ENCODE measurements at regions of chr3 and their contacts with region 1.

Region 1: GRCh38 chr3:45043728-45044299 is 17.7 kb downstream of the CLEC3B start:
- DNase-seq: no peak
- H3K4me3 ChIP-seq: no peak overlapping the region
- H3K27ac ChIP-seq: peak overlapping the region; percentile 9 to 64
- H3K4me1 ChIP-seq: no peaks in the 10 kb centered on the region
- H3K27me3 ChIP-seq: no peaks in the 10 kb centered on the region
- CTCF ChIP-seq: peak in 2 of 3 experiments; percentile 14 to 38

Region 2: GRCh38 chr3:44992555-44993470 is 51.0 kb before region 1 on chr3:
- intact Hi-C with region 1: no loop called
- DNase-seq: no peak
- H3K4me3 ChIP-seq: no peak overlapping the region
- H3K27ac ChIP-seq: no peak overlapping the region
- H3K4me1 ChIP-seq: peaks cover 0 to 6% of the 10 kb centered on the region in 2 donors
- H3K27me3 ChIP-seq: no peaks in the 10 kb centered on the region
- CTCF ChIP-seq: peak in 2 of 3 experiments; percentile 57 to 58

Region 3: DNA sequence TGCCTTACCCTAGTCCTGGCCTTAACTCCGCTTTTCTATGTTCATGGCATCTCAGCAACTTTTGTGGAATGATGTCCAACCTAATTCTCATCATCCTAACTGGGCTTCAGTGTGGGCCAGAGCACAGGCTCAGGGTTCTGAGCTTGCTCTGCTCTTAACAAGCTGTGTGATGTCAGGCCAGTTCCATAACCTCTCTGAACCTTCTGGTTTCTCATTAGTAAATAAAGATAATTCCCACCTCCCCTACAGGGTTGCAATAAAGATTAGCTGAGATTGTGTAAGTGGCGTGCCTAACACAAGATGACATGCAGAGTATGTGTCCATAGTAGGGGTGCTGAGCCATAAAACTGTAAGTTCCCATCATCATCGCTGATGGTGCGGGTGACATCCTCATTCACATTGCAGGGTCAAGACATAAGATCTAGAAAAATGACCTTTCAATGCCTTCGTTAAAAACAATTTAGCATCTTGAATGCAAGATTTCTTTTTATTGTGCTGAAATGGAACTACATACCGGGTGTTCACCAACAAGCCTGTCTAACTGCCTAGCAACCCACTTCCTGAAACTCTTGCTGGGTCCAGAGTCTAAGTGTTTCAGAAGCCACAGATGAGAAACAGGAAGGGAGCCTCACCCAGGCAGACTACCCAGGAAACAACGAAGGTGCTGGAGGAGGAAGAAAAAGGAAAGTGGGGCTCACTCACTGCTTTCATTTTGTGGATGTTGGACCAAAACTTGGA is 66.1 kb after region 1 on chr3:
- intact Hi-C with region 1: loop called (anchors 5 kb)
- DNase-seq: no peak
- H3K4me3 ChIP-seq: no peak overlapping the region
- H3K27ac ChIP-seq: no peak overlapping the region
- H3K4me1 ChIP-seq: peaks cover 2% of the 10 kb centered on the region in 2 donors
- H3K27me3 ChIP-seq: no peaks in the 10 kb centered on the region
- CTCF ChIP-seq: no peak

Region 4: DNA sequence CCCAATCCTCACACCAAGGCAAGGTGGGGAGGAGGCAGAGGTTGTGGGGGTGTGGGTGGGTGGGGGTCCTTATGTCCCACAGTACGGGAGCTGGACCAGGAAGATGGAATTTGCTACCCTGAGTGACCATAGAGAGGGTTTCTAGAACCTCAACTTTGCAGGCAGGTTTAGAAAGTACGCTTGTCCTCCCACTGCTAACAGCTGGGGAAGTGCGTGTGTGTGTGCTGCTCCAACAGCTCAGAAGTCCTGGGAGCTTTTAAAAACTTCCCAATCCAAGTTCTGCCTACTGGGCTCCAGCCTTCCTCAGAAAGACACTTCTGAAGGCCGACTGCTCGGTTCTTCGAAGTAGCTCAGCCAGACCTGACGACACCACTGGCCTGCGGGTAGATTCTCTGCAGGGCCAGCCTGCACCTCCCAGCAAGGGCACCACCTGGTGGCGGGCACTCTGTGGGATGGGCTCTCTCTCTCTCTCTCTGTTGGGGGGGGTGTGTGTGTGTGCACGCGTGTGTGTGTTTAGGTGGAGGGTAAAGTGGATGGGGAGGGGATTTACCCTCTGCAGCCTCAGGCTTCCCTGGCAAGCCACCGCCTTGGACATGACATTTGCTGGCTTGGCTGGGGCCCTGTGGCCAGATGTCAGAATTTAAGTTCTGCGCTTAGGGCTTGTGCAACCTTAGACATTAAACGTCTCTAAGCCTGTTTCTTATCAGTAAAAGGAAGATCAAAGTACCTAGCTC is 166.7 kb after region 1 on chr3:
- intact Hi-C with region 1: loop called (anchors 1 kb)
- DNase-seq: peak; percentile 25 to 84
- H3K4me3 ChIP-seq: no peak overlapping the region
- H3K27ac ChIP-seq: no peak overlapping the region
- H3K4me1 ChIP-seq: no peaks in the 10 kb centered on the region
- H3K27me3 ChIP-seq: no peaks in the 10 kb centered on the region
- CTCF ChIP-seq: peak; percentile 60 to 88 (median 80)

Region 5: DNA sequence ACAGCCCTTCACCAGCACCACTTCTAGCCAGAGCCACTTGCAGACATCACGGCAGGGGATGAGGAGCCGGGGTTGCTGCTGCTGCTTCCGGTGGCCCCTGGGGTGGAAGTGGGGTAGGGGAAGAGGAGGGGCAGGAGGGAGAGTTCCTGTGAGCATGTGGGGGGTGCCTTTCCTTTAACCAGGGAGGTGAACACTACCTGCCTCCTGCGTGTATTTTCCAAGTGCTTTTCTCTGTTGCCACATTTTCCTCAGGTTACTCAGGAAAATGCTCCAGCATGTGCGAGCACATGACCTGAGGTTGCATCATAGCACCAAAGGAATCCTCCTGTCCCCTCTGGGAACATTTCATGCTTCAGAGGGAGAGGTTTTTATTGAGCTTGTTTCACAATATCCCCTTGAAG is 633.2 kb after region 1 on chr3:
- intact Hi-C with region 1: no loop called
- DNase-seq: no peak
- H3K4me3 ChIP-seq: no peak overlapping the region
- H3K27ac ChIP-seq: no peak overlapping the region
- H3K4me1 ChIP-seq: no peaks in the 10 kb centered on the region
- H3K27me3 ChIP-seq: no peaks in the 10 kb centered on the region
- CTCF ChIP-seq: no peak

Measured in ascending aorta (tissue), 2 donors.